Panc1 (cell line): ENCODE measurements at regions of chr12 and their contacts with region 1.

Region 1: DNA sequence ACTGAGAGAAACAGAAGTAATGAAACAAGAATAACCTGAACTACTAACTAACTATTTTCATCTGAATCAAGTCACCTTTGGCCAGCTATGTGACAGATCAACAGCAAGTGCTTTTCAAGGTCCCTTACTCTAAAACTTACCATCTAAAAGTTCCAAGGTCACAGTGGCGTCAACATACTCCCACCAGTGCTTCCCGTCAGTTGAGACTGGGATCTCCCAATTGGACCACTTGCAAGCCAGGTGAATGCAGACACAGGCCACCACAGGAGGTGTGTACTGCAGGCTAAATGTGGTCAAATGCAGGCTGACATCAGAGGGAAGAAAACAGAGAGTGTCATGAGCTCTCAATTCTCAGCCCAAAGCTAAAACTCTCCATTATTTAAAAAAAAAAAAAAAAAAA is 13.8 kb upstream of the KANSL2 start:
- DNase-seq: no peak
- ATAC-seq: no peak
- H3K4me3 ChIP-seq: no peak overlapping the region
- H3K27ac ChIP-seq: no peak overlapping the region
- H3K4me1 ChIP-seq: no peaks in the 10 kb centered on the region
- H3K27me3 ChIP-seq: no peaks in the 10 kb centered on the region
- CTCF ChIP-seq: no peak

Region 2: DNA sequence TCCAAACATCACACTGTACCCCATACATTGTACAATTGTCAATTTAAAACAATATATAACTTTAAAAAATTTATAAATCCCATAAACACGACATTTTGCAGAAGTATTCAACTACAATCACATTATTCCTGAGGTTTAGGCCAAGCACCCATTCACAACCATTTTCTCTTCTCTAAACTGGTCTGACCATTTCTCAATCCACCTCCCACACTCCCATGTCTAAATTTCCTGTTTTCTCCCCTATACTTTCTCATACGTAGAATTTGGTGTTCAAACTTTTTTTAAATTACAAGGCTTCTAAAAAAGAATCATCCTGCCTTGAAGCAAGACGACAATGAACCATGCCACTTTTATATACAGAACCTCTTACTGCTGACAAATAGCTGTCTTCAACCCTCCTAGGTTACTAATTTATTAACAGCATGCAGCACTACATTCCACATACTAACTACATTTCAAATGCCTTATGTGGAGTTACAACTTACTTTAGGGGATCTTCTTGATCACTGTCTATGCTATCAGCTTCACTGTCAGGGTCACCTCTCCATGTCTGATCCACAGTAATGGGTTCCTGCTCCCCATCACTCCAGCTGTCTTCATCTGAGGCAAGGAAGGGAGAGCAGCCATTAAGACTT is 17.2 kb before region 1 on chr12:
- CTCF ChIA-PET with region 1: no interaction called
- POLR2A ChIA-PET with region 1: interaction called, 12 read pairs
- in situ Hi-C with region 1: no loop called
- intact Hi-C with region 1: no loop called
- DNase-seq: no peak
- ATAC-seq: no peak
- H3K4me3 ChIP-seq: no peak overlapping the region
- H3K27ac ChIP-seq: peak overlapping the region; percentile 55
- H3K4me1 ChIP-seq: peaks cover 20% of the 10 kb centered on the region
- H3K27me3 ChIP-seq: no peaks in the 10 kb centered on the region
- CTCF ChIP-seq: no peak

Region 3: DNA sequence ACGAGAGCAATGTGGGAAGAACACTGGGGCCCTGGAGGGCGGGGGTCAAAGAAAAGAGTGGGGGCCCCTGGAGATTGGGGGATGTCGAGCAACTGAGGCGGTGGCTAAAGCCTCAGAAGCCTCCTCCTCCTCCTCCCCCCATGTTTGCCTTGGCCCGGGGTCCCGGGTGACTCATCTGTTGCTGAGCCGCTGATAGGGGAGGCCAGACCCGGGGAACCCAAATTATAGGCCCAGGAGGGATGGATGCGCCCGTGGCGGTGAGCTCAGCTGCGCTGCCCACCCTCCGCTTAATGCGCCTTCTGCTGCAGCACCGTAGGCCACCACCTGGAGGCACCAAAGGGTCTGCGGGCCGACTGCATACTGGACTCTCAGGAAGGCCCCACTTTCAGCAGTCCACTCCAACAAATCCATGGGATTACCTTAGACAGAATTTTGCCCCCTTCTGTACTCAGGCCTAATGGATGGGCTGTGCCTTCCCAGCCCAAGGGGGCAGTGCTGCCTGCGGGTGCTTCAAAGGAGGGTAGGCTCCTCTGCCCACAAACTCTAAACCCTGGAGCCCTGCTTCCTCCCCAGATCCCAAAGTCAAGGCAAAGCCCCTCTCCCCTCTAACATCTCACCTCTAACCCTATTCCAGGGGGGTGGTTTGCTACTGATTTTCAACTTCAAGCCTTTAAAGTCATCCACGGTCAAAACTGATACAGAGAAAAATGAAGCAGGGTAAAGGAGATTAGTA is 278.2 kb after region 1 on chr12:
- CTCF ChIA-PET with region 1: no interaction called
- POLR2A ChIA-PET with region 1: no interaction called
- in situ Hi-C with region 1: no loop called
- intact Hi-C with region 1: no loop called
- DNase-seq: no peak
- ATAC-seq: no peak
- H3K4me3 ChIP-seq: no peak overlapping the region
- H3K27ac ChIP-seq: no peak overlapping the region
- H3K4me1 ChIP-seq: peaks cover 12% of the 10 kb centered on the region
- H3K27me3 ChIP-seq: peaks cover 6% of the 10 kb centered on the region
- CTCF ChIP-seq: peak; percentile 69